ENCODE measurements at regions of chrX and their contacts with region 1.

Region 1: GRCh38 chrX:48083212-48083611 is 11.8 kb upstream of the ZNF630 start:
- DNase-seq: no peak
- H3K4me3 ChIP-seq: no peak overlapping the region
- H3K27ac ChIP-seq: no peak overlapping the region
- H3K4me1 ChIP-seq: no peaks in the 10 kb centered on the region
- H3K27me3 ChIP-seq: no peaks in the 10 kb centered on the region
- CTCF ChIP-seq: peak; percentile 46 to 66 (median 58)
- EP300 ChIP-seq: no peak
- POLR2A ChIP-seq: no peak

Region 2: DNA sequence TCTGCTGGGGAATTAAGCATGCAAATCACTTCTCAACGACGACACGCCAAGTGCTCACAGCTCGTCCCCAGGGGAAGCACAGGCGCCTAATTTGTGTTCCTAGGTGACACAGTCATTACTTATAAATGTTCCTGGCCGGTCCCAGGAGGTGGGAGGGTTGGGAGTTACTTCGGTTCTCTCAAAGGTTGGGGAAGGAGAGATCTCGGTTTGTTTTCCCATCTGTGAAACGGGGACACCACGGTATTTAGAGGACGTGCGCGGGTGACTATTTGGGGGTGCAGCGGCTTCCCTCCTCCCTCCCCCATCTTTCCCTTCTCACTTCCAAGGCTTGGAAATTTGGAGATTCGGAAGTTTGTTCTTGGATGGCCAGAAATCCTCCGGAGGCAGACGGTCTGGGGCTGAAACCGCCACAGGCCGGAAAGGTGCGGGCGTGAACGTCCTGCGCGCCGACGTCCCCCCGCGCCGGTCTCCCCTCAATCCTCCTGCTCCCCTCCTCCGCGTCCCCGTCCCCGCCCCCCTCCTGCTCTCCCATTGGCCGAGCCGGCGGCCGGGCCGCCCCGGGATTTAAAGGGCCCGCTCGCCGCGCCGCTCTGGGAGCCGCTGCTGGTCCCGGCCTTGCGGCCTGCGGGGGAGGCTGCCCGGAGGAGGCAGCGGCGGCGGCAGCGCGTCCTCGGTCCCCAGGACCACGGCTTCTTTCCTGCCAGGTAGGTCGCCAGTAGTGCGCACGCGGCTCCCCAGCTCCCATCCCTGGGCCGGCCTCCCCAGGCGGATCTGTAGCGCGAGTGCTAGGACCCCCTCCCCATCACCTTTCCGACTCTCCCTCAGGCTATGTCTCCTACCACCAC is 425.4 kb after region 1 on chrX and contains the start of gene PORCN:
- intact Hi-C with region 1: loop called (anchors 10 kb)
- DNase-seq: peak; percentile 92
- H3K4me3 ChIP-seq: peak within 1 kb of the TSS; percentile 71 to 74 (median 72)
- H3K27ac ChIP-seq: peak within 1 kb of the TSS; percentile 76 to 83 (median 80)
- H3K4me1 ChIP-seq: peaks cover 8 to 16% (median 14%) of the 10 kb centered on the region in 4 donors
- H3K27me3 ChIP-seq: peaks cover 0 to 4% (median 0%) of the 10 kb centered on the region in 4 donors
- CTCF ChIP-seq: no peak
- EP300 ChIP-seq: no peak
- POLR2A ChIP-seq: no peak
- total RNA-seq, gene PORCN: 15.0 to 21.5 (median 18.9) TPM

Region 3: GRCh38 chrX:48636776-48637175 is 553.6 kb after region 1 on chrX:
- intact Hi-C with region 1: no loop called
- DNase-seq: no peak
- H3K4me3 ChIP-seq: no peak overlapping the region
- H3K27ac ChIP-seq: no peak overlapping the region
- H3K4me1 ChIP-seq: peaks cover 0 to 4% (median 3%) of the 10 kb centered on the region in 4 donors
- H3K27me3 ChIP-seq: no peaks in the 10 kb centered on the region
- CTCF ChIP-seq: no peak
- EP300 ChIP-seq: no peak
- POLR2A ChIP-seq: no peak